ENCODE measurements at regions of chr9 and their contacts with region 1.

Region 1: DNA sequence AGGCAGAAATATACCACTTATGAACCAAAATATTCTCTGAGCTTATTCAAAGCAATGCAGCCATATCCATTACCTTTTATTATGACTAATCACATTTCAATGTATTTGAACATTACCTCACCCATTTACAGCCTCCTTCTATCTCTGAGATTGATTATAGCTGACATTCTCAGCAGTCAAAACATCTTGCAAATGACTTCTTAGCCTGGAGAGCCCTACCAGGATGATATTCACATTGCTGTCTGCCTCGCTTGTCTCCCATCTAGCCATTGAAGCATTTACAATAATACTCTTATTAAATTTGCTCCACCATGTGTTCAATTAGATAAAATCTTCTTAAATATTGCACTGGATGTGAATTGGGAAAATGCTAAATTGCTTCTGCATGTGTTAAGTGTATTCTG is 1879.9 kb upstream of the ACO1 start:
- DNase-seq: no peak
- H3K4me3 ChIP-seq: no peak overlapping the region
- H3K27ac ChIP-seq: no peak overlapping the region
- H3K4me1 ChIP-seq: no peaks in the 10 kb centered on the region
- CTCF ChIP-seq: no peak

Region 2: GRCh38 chr9:31697956-31698355 is 1193.5 kb after region 1 on chr9:
- CTCF ChIA-PET with region 1: no interaction called
- POLR2A ChIA-PET with region 1: no interaction called
- intact Hi-C with region 1: loop called (anchors 5 kb)
- DNase-seq: no peak
- H3K4me3 ChIP-seq: no peak overlapping the region
- H3K27ac ChIP-seq: no peak overlapping the region
- H3K4me1 ChIP-seq: no peaks in the 10 kb centered on the region
- CTCF ChIP-seq: no peak

Measured in OCI-LY7 (cell line).